Left colon (tissue), 2 donors: ENCODE measurements at regions of chr3 and their contacts with region 1.

Region 1: GRCh38 chr3:4712143-4712542 is 219.0 kb downstream of the ITPR1 start:
- DNase-seq: peak in 1 of 2 donors; percentile 80
- ATAC-seq: peak; percentile 87

Region 2: DNA sequence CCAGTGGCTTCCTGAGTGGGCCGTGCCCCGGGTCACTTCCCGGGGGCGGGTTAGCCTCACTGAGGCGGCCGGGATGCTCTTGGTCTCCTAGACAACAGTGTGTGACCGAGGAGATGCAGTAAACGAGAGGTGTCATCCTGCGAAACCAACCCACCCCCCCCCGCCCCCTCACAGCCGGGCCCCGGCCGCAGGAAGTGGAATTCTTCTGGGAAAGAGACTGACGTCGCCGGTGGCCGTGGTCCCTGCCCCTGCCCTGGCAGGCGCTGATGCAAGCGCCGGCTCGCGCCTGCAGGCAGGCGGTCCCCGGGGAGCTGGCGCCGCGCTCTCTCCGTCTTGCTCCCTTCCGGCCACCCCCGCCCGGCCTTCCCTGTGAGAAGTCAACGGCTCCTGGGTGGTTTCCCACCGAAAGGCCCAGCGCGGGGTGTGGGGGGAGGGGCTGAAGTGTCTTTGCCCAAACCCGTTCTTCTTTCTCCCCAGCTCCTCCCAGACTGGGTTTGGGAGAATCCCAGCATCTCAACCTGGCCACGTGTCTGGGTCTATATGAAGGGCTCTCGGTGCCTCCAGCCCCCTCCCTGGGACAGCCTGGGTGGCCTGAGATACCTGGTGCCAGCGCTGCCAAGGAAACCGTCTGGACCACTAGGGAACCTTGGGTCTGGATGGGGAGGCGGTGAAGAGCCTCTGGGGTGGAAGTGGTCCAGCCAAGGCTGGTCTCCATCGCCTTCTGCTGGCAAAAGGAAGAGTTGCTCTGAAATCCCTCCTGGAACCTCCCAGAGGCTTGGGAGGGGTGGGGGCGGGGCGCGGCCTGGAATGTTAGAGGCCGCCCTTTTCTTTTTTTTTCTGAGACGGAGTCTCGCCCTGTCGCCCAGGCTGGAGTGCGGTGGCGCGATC is 314.4 kb after region 1 on chr3:
- intact Hi-C with region 1: loop called in 1 of 2 experiments (anchors 10 kb)
- DNase-seq: peak; percentile 84 to 90
- ATAC-seq: peak; percentile 98

Region 3: GRCh38 chr3:5057857-5058324 is 345.7 kb after region 1 on chr3:
- intact Hi-C with region 1: loop called in 1 of 2 experiments (anchors 2 kb)
- DNase-seq: peak; percentile 75 to 80
- ATAC-seq: peak; percentile 98